RWPE1 (cell line): ENCODE measurements at regions of chr9 and their contacts with region 1.

Region 1: DNA sequence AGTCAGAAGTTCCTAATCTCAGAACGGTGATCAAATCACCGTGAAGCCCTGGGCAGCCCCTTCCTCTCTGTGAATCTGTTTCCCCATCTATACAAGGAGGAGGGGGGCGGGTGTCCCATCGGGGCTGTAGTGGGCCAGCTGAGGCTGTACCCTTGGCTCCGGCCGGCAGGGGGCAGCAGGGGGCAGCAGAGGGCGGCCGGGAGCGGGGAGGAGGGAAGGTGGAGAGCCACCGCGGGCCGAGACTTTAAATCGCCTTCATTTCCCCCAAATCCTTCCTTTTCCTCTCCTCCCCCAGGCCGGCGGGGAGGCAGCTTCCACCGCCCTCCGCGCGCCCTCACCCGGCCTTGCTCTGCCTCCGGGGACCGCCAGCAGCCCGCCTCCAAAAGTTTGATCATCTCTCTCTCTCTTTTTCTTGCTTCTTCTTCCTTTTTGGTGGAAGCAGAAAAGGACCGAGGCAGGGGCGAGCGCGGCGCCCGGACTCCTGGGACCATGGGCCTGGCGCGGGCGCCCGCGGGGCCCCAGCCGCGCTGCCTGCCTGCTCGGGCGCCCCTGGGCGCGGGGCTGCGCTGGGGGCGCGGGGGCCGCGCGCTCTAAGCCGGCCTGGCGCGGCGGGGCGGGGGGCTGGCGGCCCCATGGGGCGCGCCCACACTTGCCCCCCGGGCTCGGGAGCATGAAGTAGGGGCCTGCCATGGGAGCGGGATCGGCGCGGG is at the start of gene COL27A1:
- DNase-seq: peak; percentile 96
- H3K27ac ChIP-seq: peak within 1 kb of the TSS; percentile 64
- CTCF ChIP-seq: peak; percentile 100

Region 2: GRCh38 chr9:113340017-113340699 is 815.3 kb before region 1 on chr9 and contains the start of gene WDR31:
- CTCF ChIA-PET with region 1: no interaction called
- POLR2A ChIA-PET with region 1: no interaction called
- DNase-seq: peak; percentile 97
- H3K27ac ChIP-seq: peak within 1 kb of the TSS; percentile 75
- CTCF ChIP-seq: no peak

Region 3: DNA sequence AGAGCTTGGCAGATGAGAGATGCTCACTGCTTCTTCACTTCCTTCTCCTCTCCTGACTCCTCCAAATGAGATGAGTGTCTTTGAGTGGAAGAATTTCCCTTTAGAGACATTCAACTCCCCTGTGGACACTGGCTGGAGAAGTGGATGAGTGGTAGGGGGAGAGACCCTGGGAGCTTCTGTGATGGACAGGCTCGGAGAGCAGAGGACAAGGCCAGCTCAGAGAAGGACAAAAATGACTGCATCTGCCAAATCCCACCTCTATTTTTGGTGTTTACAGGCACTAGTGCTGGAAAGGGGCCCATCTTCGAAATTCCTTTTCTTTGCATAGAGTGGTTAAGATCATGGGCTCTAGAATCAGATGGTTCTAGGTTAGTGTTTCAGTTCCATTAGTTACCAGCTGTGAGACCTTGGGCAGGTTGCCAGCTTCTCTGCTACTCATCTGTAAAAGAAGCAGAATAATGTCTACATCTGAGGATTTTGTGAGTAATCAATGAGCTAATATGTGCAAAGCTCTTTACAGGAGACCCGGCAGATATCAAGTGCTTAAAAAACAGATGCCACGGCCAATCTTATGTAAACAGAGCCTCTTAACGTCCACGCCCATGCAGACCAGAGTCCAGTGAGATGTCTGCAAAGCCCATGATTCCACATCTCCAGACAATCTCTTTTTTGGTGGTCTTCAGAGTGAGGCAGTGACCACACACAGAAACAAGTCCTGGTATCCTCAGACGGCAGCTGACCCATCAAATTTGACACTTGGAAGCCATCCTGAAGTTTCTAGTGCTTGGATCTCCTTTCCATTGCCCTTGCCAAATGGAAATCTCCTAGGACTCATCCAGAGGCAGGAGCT is 13.6 kb before region 1 on chr9:
- CTCF ChIA-PET with region 1: interaction called, 16 read pairs
- POLR2A ChIA-PET with region 1: no interaction called
- DNase-seq: no peak
- H3K27ac ChIP-seq: no peak overlapping the region
- CTCF ChIP-seq: no peak

Region 4: DNA sequence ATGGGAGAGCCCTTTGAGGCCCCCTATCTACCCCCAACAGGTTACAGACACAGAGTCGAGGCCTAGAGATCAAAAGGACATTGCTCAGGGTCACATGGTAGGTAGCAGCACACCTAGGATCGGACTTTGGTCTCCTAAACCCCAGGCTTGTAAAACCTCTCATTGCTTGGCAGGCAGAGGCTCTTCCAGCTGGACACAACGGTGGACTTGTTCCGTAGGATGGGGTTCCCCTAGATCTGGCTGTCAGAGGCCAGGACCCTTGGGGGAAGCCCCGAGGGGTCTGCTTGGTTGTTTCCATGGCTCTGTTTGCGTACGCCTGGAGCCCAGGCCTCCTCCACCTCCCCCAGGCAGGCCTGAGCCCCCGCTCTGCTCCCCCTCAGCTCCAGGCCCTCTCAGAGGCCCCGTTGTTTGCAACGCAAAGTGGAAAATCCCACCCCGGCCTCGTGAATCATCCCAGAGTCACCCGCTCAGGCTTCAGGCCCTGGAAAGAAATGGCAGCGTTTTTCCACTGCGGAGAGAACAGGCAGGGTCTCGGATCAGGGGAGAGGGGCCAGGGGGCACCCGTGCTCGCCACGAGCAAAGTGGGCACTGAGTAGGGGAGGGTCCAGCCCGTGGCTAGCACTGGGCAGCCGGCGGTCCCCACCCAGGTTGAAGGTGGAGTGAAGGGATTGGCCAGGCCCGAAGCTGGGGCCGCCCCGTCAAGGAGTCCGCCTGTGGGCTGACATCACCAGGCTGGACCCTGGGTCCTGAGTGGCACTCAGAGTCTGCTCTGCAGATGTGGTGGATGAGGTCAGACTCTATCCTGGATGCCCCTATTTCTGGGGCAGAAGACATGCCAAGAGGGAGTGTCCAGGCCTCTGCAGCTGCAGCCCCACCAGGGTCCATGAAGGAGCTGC is 19.7 kb after region 1 on chr9:
- CTCF ChIA-PET with region 1: interaction called, 13 read pairs
- POLR2A ChIA-PET with region 1: no interaction called
- DNase-seq: no peak
- H3K27ac ChIP-seq: peak overlapping the region; percentile 87
- CTCF ChIP-seq: no peak